A673 (cell line): ENCODE measurements at regions of chr7 and their contacts with region 1.

Region 1: GRCh38 chr7:86904949-86905834 is 154.3 kb downstream of the ELAPOR2 start:
- DNase-seq: peak; percentile 46
- H3K4me3 ChIP-seq: no peak overlapping the region
- H3K27ac ChIP-seq: no peak overlapping the region
- H3K4me1 ChIP-seq: no peaks in the 10 kb centered on the region
- H3K27me3 ChIP-seq: peaks cover 29% of the 10 kb centered on the region
- CTCF ChIP-seq: peak; percentile 68

Region 2: DNA sequence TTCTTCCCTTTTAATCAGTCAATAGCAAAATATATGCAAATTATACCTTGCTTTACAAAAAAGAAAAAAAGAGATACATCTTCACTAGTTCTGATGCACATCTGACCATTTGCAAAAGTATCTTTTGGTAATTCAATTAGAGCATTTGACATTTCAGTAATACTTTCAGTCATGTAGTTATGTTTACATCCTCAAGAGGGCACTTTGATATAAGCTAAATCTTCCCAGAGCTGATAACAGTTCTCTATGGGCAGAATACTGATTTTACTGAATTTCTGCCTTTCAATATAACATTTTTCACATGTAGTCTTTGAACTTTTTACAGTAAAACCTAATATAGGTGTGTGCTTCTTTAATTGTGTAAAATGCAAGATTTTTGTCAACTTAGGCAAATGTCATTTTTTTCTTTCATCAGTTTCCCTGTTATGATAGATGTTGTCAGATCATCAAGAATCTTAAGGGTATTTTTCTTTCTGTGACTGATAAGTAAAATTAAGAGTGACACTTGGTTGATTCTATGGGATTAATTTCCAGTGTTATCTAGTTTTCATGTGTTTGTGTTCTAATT is 1014.9 kb before region 1 on chr7:
- CTCF ChIA-PET with region 1: interaction called, 8 read pairs
- POLR2A ChIA-PET with region 1: no interaction called
- intact Hi-C with region 1: loop called (anchors 5 kb)
- DNase-seq: peak; percentile 34
- H3K4me3 ChIP-seq: no peak overlapping the region
- H3K27ac ChIP-seq: no peak overlapping the region
- H3K4me1 ChIP-seq: no peaks in the 10 kb centered on the region
- H3K27me3 ChIP-seq: no peaks in the 10 kb centered on the region
- CTCF ChIP-seq: peak; percentile 66

Region 3: GRCh38 chr7:86469680-86470295 is 435.4 kb before region 1 on chr7:
- CTCF ChIA-PET with region 1: no interaction called
- POLR2A ChIA-PET with region 1: no interaction called
- intact Hi-C with region 1: loop called (anchors 10 kb)
- DNase-seq: peak; percentile 78
- H3K4me3 ChIP-seq: no peak overlapping the region
- H3K27ac ChIP-seq: no peak overlapping the region
- H3K4me1 ChIP-seq: no peaks in the 10 kb centered on the region
- H3K27me3 ChIP-seq: peaks cover 39% of the 10 kb centered on the region
- CTCF ChIP-seq: peak; percentile 86

Region 4: DNA sequence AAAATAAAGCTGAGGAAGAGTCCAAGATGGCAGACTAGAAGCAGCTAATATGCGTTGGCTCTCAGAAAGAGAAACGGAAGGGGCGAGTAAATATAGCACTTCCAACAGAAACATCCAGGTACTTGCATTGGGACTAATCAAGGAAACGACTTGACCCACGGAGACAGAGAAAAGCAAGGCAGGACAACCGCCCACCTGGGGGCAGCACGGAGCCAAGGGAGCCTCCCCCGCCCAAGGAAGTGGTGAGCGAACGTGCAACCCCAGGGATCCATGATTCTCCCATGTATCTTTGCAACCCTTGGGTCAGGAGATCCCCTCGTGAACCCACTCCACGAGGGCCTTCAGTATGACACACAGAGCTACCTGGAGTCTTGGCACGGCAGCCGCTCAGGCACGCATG is 306.9 kb before region 1 on chr7:
- CTCF ChIA-PET with region 1: interaction called, 3 read pairs
- POLR2A ChIA-PET with region 1: no interaction called
- intact Hi-C with region 1: loop called (anchors 2 kb)
- DNase-seq: peak; percentile 39
- H3K4me3 ChIP-seq: no peak overlapping the region
- H3K27ac ChIP-seq: no peak overlapping the region
- H3K4me1 ChIP-seq: no peaks in the 10 kb centered on the region
- H3K27me3 ChIP-seq: no peaks in the 10 kb centered on the region
- CTCF ChIP-seq: peak; percentile 59

Region 5: DNA sequence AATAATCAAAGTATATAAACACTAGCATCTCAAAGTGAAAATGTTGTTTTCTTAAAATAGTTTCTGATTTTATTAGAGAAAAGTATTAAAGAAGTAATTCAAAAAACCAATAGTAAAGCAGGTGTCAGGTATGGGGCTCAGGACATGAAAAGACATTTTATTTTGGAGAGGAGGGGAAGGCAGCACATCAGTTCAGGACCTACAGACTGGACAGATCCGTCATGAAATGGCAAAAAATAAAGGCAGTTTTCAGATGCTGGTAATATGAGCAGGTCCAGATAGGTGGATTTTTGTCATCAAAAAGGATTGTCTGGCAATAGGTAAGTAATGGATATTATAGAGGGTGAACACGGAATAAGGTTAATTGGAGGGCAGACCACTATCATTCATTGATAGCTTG is 212.4 kb before region 1 on chr7:
- CTCF ChIA-PET with region 1: no interaction called
- POLR2A ChIA-PET with region 1: no interaction called
- intact Hi-C with region 1: no loop called
- DNase-seq: no peak
- H3K4me3 ChIP-seq: no peak overlapping the region
- H3K27ac ChIP-seq: no peak overlapping the region
- H3K4me1 ChIP-seq: no peaks in the 10 kb centered on the region
- H3K27me3 ChIP-seq: peaks cover 12% of the 10 kb centered on the region
- CTCF ChIP-seq: no peak

Region 6: DNA sequence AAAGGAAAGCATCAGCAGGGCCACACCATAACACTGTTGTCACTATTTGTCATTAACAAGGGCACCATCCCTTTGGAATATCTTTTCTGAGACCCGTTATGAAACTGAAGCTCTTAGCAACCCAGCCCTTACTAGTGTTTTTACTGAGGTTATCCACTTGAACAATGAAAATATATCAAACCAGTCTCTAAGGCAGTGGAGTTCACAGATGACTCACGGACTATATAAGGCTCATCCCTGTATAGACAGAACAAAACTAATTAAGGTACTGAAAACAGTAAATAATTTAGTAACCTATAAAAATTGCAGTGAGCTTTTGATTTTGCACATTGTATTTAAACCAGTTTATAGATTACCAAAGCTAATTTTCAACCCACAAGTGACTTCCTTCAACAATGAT is 41.7 kb before region 1 on chr7:
- CTCF ChIA-PET with region 1: no interaction called
- POLR2A ChIA-PET with region 1: no interaction called
- intact Hi-C with region 1: no loop called
- DNase-seq: no peak
- H3K4me3 ChIP-seq: no peak overlapping the region
- H3K27ac ChIP-seq: no peak overlapping the region
- H3K4me1 ChIP-seq: no peaks in the 10 kb centered on the region
- H3K27me3 ChIP-seq: peaks cover 5% of the 10 kb centered on the region
- CTCF ChIP-seq: no peak